ENCODE measurements at regions of chr1 and their contacts with region 1.

Region 1: DNA sequence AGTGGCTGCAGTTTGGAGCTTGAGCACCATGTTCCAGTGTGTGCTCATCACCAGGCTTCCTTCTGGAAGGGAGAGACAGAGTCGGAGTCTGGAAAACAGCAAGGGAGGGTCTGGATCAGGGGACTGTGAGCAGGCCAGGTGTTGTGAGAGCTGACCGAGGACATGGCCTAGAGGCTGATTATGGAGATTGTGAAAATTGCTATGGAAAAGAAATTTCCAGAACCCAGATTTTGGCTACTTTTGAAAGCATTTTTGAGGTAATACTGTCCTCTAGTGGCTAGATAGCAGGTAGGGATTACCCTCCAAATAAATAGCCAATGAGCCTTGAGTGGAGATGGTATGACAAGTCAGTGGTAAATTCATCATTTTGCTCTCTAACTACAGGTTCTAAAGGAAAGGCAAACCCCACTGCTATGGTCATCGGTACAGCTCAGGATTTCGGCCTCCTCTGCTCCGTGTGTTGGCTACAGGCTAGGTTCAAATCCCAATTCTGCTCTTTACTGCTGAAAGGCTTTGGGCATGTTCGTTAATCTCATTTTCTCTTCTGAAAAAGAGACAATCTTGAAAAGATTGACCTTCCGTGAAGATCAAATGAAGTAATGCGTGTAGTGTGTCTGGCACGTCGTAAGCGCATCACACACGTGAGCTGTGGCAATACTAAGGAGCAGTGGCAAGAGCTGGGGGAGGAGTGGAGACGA is 1.0 kb upstream of the HAO2 start:
- DNase-seq: no peak
- ATAC-seq: peak; percentile 61

Region 2: DNA sequence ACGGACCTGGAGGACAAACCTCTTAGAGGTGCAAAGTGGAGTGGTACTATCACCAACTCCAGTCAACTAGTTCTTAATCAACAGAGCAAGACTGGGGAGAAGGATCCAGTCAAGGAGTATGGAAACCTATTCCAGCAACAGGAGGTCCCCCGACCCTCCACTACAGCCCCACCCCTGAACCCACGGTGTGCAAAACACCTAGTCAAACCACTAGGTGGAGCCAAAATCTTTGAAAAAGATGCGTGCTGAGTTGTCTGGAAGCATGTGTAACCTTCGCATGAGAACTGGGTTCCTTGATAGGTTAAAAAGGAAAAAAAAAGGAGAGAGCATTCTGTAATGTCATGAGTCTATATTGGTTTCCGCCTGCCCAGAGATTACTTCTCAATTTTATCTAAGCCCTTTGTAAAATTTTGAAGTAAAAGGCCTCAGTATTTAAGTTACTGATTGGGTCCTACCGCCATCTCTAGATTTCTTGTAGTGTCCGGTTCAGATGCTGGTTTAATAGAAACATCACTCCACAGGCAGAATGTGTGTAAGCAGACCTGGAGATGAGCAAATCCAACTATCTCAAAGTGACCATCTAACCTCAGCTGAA is 80.9 kb before region 1 on chr1:
- intact Hi-C with region 1: loop called (anchors 10 kb)
- DNase-seq: peak in 1 of 2 donors; percentile 6
- ATAC-seq: peak; percentile 73

Region 3: GRCh38 chr1:119565131-119565772 is 197.7 kb after region 1 on chr1:
- intact Hi-C with region 1: no loop called
- DNase-seq: no peak
- ATAC-seq: peak; percentile 64

Measured in left colon (tissue), 2 donors.